Activated naive CD4-positive, alpha-beta T cell treated with anti-CD3 and anti-CD28 coated beads for 36 hours (primary cell): ENCODE measurements at regions of chr17 and their contacts with region 1.

Region 1: GRCh38 chr17:61556224-61557188 is 34.5 kb downstream of the NACA2 start:
- DNase-seq: no peak
- H3K4me3 Mint-ChIP-seq: no peak overlapping the region
- H3K27ac Mint-ChIP-seq: no peak overlapping the region
- H3K4me1 Mint-ChIP-seq: peaks cover 3% of the 10 kb centered on the region
- H3K27me3 Mint-ChIP-seq: peaks cover 21% of the 10 kb centered on the region

Region 2: GRCh38 chr17:60781880-60782412 is 774.6 kb before region 1 on chr17:
- CTCF ChIA-PET with region 1: no interaction called
- intact Hi-C with region 1: loop called (anchors 5 kb)
- DNase-seq: no peak
- H3K4me3 Mint-ChIP-seq: no peak overlapping the region
- H3K27ac Mint-ChIP-seq: no peak overlapping the region
- H3K4me1 Mint-ChIP-seq: no peaks in the 10 kb centered on the region
- H3K27me3 Mint-ChIP-seq: no peaks in the 10 kb centered on the region

Region 3: DNA sequence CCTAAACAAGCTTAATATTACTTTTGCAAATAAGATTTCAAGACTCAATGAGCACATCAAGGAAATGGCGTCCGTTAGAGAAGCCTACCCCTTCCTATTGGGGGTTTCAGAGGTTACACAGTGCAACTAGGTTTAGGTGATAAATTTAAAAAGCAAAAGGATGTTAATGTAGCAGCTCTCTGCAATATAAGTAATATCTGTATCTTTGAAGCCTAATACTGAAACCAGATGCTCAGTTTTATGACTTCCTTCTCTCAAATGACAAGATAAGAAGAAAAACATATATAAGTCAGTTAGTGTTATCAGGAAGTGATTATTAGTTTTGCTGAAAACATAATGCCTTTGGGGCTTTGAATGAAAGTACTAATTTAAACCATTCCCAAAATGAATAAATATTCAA is 562.9 kb after region 1 on chr17:
- CTCF ChIA-PET with region 1: no interaction called
- intact Hi-C with region 1: no loop called
- DNase-seq: no peak
- H3K4me3 Mint-ChIP-seq: no peak overlapping the region
- H3K27ac Mint-ChIP-seq: no peak overlapping the region
- H3K4me1 Mint-ChIP-seq: peaks cover 7% of the 10 kb centered on the region
- H3K27me3 Mint-ChIP-seq: no peaks in the 10 kb centered on the region